A673 (cell line): ENCODE measurements at regions of chr7 and their contacts with region 1.

Region 1: GRCh38 chr7:17183630-17184328 is 114.7 kb upstream of the AHR start:
- DNase-seq: peak; percentile 76
- H3K4me3 ChIP-seq: no peak overlapping the region
- H3K27ac ChIP-seq: no peak overlapping the region
- H3K4me1 ChIP-seq: peaks cover 6% of the 10 kb centered on the region
- H3K27me3 ChIP-seq: no peaks in the 10 kb centered on the region
- CTCF ChIP-seq: no peak

Region 2: GRCh38 chr7:16891338-16891737 is 292.4 kb before region 1 on chr7:
- CTCF ChIA-PET with region 1: no interaction called
- POLR2A ChIA-PET with region 1: interaction called, 12 read pairs
- intact Hi-C with region 1: no loop called
- DNase-seq: peak; percentile 80
- H3K4me3 ChIP-seq: no peak overlapping the region
- H3K27ac ChIP-seq: no peak overlapping the region
- H3K4me1 ChIP-seq: no peaks in the 10 kb centered on the region
- H3K27me3 ChIP-seq: no peaks in the 10 kb centered on the region
- CTCF ChIP-seq: peak; percentile 76